SK-N-SH (cell line): ENCODE measurements at regions of chr2 and their contacts with region 1.

Region 1: GRCh38 chr2:63500398-63500797 is 87.9 kb downstream of the WDPCP start:
- DNase-seq: no peak
- H3K4me3 ChIP-seq: no peak overlapping the region
- H3K27ac ChIP-seq: no peak overlapping the region
- H3K4me1 ChIP-seq: no peaks in the 10 kb centered on the region; a peak in 1 of 4 replicates
- H3K27me3 ChIP-seq: no peaks in the 10 kb centered on the region
- CTCF ChIP-seq: no peak
- EP300 ChIP-seq: no peak
- RAD21 ChIP-seq: no peak

Region 2: DNA sequence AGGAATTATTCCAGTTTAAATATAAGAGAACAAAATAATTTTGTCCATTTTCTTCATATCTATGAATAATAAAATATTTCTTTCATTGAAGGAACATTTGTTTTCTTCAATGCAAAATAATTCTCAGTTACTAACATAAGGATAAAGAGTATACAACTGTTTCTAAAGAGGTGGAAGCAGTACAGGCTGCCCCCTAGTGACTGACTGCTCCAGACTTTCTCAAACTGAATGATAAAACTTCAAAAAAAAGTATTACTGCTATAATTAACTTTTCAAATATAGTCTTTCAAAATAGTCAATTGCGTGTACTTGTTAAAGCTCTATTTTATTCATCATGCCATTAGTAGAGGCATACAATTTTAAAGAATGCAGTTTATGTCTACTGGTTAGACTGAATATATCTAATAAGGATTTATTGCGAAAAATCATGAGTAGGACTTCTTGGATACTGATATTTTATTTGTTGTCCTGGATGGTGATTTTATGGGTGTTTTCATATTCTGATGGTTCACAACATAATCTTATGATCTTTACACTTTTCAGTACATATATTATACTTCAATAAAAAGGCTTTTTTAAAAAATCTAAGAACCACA is 12.2 kb before region 1 on chr2:
- CTCF ChIA-PET with region 1: interaction called, 28 read pairs
- POLR2A ChIA-PET with region 1: no interaction called
- DNase-seq: peak; percentile 29
- H3K4me3 ChIP-seq: no peak overlapping the region
- H3K27ac ChIP-seq: no peak overlapping the region
- H3K4me1 ChIP-seq: no peaks in the 10 kb centered on the region
- H3K27me3 ChIP-seq: no peaks in the 10 kb centered on the region
- CTCF ChIP-seq: peak; percentile 86
- EP300 ChIP-seq: no peak
- RAD21 ChIP-seq: peak; percentile 72